ENCODE measurements at regions of chr2 and their contacts with region 1.

Region 1: DNA sequence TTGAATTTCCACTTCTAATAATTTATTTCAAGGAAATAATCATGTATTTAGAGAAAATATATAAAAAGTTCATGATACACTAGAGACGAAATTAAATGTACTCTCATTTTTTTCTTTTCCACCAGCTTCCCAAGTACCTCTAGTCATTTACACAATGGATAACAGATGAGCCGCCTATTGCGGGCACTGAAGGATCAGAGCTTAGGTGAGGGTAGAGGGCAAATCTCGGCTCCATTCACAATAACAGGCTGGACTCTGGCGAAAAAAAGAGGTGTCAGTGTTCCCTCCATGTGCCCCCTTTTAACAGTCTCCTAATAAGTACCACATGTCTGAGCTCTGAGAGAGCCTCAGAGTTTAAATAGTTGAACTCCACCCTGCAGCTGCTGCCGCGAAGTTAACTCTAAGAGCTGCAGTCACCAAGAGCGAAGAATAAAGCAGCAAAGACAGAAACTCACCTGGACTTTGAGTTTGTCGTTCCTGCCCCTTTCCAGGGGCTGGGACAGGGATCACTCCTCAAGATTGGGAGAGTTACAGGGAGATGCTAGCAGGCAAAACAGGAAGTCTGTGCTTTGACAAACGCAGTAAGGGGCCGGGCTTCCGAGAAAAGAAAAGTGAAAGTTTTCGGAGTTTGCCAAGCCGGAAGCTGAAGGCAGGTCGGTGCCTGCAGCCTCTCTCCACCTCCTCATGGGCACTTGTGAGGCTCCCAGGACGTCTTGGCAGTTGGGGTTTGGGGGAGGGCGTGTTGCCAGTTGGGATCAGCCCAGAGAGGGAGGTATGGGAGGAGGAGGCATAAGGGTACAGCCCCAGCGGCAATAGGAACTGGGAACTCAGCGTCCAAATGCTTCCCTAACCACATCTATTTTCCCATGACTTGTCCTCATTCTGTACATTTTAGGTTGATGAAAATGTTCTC is at the start of gene SP110:
- DNase-seq: peak; percentile 59 to 90 (median 72)
- ATAC-seq: peak; percentile 92
- H3K4me3 ChIP-seq: peak within 1 kb of the TSS; percentile 86
- H3K4me3 Mint-ChIP-seq: peak within 1 kb of the TSS; percentile 94
- H3K27ac ChIP-seq: peak within 1 kb of the TSS; percentile 66 to 78
- H3K27ac Mint-ChIP-seq: peak within 1 kb of the TSS; percentile 98
- H3K4me1 ChIP-seq: peaks cover 35% of the 10 kb centered on the region
- H3K4me1 Mint-ChIP-seq: peaks cover 63% of the 10 kb centered on the region
- H3K27me3 ChIP-seq: no peaks in the 10 kb centered on the region
- H3K27me3 Mint-ChIP-seq: no peaks in the 10 kb centered on the region
- CTCF ChIP-seq: no peak
- total RNA-seq, gene SP110: 59.4 to 63.7 TPM

Region 2: GRCh38 chr2:229921892-229922445 is 297.7 kb before region 1 on chr2 and contains the start of gene TRIP12:
- CTCF ChIA-PET with region 1: no interaction called
- POLR2A ChIA-PET with region 1: interaction called, 4 read pairs
- intact Hi-C with region 1: loop called in 1 of 2 experiments (anchors 5 kb)
- DNase-seq: peak; percentile 77 to 95 (median 86)
- ATAC-seq: peak; percentile 74
- H3K4me3 ChIP-seq: peak within 1 kb of the TSS; percentile 85
- H3K4me3 Mint-ChIP-seq: peak within 1 kb of the TSS; percentile 98
- H3K27ac ChIP-seq: peak within 1 kb of the TSS; percentile 97 to 98
- H3K27ac Mint-ChIP-seq: peak within 1 kb of the TSS; percentile 95
- H3K4me1 ChIP-seq: peaks cover 28% of the 10 kb centered on the region
- H3K4me1 Mint-ChIP-seq: peaks cover 55% of the 10 kb centered on the region
- H3K27me3 ChIP-seq: no peaks in the 10 kb centered on the region
- H3K27me3 Mint-ChIP-seq: peaks cover 5% of the 10 kb centered on the region
- CTCF ChIP-seq: no peak
- total RNA-seq, gene TRIP12: 151 to 178 TPM

Region 3: DNA sequence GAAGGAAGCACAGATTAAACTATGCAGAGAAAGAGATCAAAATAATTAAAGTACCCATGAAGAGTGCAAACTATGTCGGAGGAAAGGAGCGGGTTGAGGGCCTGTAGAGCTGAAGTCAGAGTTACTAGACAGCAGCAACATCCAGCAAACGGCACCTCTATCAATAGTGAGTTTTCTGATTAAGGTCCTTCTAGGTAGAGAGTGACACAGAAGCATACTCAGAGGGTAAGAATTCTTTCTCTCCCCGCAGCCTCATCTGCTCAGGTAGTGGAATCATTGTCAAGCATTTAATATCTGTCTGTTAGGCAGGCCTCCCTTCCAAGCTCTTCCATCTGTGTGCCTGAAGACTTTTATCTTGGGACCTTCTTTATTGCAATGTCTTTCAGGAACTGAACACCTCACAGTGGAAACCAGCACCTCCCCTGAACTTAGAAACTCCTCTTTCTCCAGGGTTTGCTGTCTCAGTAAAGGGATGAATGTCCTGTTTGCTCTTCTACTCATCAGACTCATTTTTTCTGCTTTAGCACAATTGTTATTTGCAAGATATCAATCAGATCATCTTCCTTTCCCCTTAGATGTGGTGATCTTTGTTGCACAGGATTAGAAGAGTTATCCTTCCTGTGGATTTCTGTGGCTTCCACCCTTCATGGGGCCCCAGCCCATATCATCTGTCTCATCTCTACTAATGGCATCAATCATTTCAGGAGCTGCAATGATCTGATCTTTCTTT is 34.6 kb after region 1 on chr2:
- CTCF ChIA-PET with region 1: no interaction called
- POLR2A ChIA-PET with region 1: interaction called, 24 read pairs
- intact Hi-C with region 1: no loop called
- DNase-seq: peak in 7 of 14 experiments; percentile 12 to 72 (median 40)
- ATAC-seq: peak; percentile 84
- H3K4me3 ChIP-seq: peak overlapping the region; percentile 22
- H3K4me3 Mint-ChIP-seq: no peak overlapping the region
- H3K27ac ChIP-seq: no peak overlapping the region
- H3K27ac Mint-ChIP-seq: no peak overlapping the region
- H3K4me1 ChIP-seq: peaks cover 29% of the 10 kb centered on the region
- H3K4me1 Mint-ChIP-seq: no peaks in the 10 kb centered on the region
- H3K27me3 ChIP-seq: no peaks in the 10 kb centered on the region
- H3K27me3 Mint-ChIP-seq: no peaks in the 10 kb centered on the region
- CTCF ChIP-seq: no peak

Region 4: DNA sequence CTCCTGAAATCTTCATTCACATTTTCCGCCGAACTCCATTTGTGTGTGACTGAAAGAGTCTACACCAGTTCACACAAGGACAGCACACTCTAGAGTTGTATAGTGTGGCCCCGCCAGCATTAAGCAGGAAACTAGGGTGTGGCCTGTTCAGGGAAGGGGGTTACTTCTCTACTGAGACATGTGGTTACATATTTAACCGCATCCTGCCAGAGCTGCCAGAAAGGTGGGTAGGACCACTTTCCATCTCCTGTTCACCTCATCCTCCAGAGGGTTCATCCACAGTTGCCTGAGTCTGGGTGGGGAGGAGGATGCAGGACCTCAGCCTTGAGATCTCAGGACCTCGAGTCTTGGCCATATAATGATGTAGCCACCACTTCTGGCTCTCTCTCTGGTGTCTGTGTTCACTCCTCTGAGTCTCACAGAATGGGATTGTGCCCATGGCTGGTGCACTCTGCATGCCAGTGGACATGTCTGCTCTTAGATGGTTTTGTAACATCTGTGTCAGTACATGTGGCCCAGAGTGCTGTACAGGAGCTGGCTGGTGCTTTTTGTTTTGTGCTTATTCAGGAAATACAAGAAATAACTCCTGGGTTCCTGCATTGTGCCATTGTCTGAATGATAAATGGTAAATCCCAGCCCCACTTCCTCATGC is 99.7 kb after region 1 on chr2:
- CTCF ChIA-PET with region 1: no interaction called
- POLR2A ChIA-PET with region 1: interaction called, 43 read pairs
- intact Hi-C with region 1: loop called in 1 of 2 experiments (anchors 2 kb)
- DNase-seq: peak; percentile 50 to 97 (median 69)
- ATAC-seq: peak; percentile 95
- H3K4me3 ChIP-seq: peak overlapping the region; percentile 24
- H3K4me3 Mint-ChIP-seq: peak overlapping the region; percentile 72
- H3K27ac ChIP-seq: peak overlapping the region; percentile 62 to 69
- H3K27ac Mint-ChIP-seq: peak overlapping the region; percentile 87
- H3K4me1 ChIP-seq: peaks cover 61% of the 10 kb centered on the region
- H3K4me1 Mint-ChIP-seq: peaks cover 88% of the 10 kb centered on the region
- H3K27me3 ChIP-seq: no peaks in the 10 kb centered on the region
- H3K27me3 Mint-ChIP-seq: no peaks in the 10 kb centered on the region
- CTCF ChIP-seq: no peak

Region 5: DNA sequence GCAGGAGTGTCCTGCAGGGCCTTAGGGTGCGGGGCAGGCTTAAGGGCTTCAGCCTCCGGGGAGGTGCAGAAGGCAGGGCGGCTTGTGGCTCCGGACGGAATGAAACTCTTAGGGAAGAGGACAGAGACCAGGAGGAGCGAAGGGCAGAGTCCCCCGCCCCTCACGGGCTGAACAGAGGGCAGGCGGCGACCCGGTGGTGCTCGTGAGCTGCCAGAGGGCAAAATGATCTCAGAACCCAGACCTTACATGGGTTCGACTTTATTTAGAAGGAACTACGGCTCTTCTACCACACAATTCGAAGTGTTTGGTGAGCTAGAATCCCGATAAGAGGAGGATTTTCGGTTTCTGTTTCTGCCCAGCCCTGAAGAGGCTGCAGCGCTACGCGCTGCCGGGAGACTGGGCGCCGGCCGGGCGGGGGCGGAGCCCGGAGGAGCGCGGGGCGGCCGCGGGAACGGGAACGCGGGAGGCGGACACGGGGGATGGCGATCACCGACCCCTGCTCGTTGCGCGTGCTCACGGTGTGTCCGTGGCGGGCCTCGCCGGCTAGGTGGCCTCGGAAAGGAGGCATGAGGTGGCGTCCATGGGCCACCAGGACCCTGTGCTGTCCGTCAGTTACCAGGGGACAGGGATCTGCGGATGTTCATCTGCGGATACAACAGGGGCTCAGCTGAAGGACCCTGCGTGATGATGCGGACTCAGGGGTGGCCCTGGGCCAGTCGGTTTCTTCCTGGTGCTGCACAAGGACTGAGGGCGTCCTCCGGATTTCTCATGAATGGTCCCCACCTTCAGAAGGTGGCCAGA is 192.1 kb after region 1 on chr2:
- CTCF ChIA-PET with region 1: no interaction called
- POLR2A ChIA-PET with region 1: interaction called, 30 read pairs
- intact Hi-C with region 1: loop called in 1 of 2 experiments (anchors 1 kb)
- DNase-seq: peak in 13 of 14 experiments; percentile 29 to 81 (median 48)
- ATAC-seq: peak; percentile 68
- H3K4me3 ChIP-seq: peak overlapping the region; percentile 92
- H3K4me3 Mint-ChIP-seq: peak overlapping the region; percentile 97
- H3K27ac ChIP-seq: peak overlapping the region; percentile 83 to 89
- H3K27ac Mint-ChIP-seq: peak overlapping the region; percentile 93
- H3K4me1 ChIP-seq: peaks cover 68% of the 10 kb centered on the region
- H3K4me1 Mint-ChIP-seq: peaks cover 95% of the 10 kb centered on the region
- H3K27me3 ChIP-seq: no peaks in the 10 kb centered on the region
- H3K27me3 Mint-ChIP-seq: no peaks in the 10 kb centered on the region
- CTCF ChIP-seq: no peak

Measured in CD4-positive, alpha-beta T cell (primary cell).